ENCODE measurements at regions of chr12 and their contacts with region 1.

Region 1: DNA sequence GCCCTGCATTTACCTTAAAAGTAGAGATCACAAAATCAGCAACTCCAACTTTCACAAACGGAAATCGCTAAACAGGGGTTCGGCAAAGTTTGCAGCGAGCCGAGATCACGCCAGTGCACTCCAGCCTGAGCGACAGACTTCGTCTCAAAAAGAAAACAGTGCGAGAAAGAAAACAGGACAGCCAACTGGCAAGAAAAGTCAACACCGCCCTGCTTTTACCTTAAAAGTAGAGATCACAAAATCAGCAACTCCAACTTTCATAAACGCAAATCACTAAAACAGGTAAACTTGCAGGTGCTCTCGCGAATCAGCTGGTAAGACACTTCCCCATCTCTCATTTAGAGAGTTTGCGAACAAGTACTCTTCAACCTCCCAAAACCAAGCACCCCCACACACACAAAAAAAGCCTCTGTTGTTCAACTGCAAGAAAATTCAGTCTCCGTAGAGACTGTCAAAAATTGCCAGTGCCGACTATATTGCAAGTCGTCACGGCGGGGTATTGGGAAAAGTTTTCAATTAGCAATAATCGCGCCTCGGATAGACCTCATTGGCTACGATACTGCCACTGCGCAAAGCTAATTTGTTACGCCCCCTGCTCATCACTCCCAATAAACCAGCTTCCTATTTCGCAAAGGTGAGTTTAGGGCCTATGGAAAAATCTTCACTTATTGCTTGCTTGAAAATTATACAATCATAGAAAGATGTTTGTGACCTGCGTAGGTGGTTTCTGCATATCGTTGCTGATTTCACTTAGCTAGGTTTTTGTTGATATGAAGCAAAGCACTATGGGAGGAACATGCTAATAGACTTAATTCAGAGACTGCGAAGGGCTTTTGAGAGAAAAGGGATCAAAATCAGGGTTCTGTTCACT is at the start of gene RNU4-1:
- DNase-seq: peak; percentile 99
- ATAC-seq: peak; percentile 60
- H3K4me3 ChIP-seq: peak within 1 kb of the TSS; percentile 47 to 56
- H3K27ac ChIP-seq: peak within 1 kb of the TSS; percentile 84
- H3K4me1 ChIP-seq: peaks cover 10 to 36% of the 10 kb centered on the region in 2 experiments
- H3K27me3 ChIP-seq: no peaks in the 10 kb centered on the region
- CTCF ChIP-seq: 0 out of 6 replicates have a peak, but pooled peaks of 1 of the 3 experiments have one; percentile 6
- POLR2A ChIP-seq: peak; percentile 100
- RAD21 ChIP-seq: 0 out of 2 replicates have a peak, but pooled peaks have one; percentile 24
- total RNA-seq, gene RNU4-1: 2,323 TPM

Region 2: DNA sequence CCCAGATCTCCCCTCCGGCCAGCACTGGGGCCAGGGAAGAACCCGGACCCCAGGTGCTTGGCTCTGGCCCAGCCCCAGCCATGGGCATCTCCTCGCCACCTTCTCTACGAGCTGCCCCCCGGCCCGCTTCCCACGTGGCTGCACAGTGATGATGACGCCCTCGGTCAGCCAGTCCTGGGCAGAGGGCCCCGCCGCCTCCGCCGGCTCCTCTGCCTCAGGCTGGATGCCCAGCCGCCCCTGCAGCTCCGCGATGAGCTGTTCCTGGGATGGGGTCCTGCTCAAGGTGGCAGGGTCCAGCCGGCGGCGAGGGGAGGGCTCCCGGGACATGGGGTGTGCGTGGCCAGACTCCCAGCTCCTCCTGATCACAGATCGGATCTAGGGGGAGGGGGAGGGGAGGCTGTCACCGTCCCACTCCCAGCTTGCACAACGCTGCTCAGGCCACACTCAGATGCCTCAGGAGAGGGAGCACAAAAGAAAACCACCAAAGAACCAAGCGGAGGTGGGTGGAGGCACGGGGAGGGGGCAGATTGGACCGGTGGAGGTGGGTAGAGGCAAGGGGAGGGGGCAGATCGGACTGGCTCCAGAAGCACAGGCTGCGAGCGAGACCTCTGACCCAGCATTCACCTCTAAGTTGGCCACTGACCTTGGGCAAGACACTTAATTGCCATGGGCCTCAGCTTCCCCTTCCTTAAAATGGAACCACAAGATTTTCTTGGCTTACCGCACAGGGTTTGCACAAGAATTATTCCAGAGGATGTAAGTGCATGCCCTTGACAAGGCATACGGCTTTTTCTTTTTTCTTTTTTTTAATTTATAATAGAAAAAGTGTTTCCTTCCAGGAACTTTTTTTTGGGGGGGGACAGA is 75.9 kb before region 1 on chr12:
- CTCF ChIA-PET with region 1: no interaction called
- POLR2A ChIA-PET with region 1: interaction called, 11 read pairs
- RAD21 ChIA-PET with region 1: no interaction called
- intact Hi-C with region 1: no loop called
- DNase-seq: no peak
- ATAC-seq: no peak
- H3K4me3 ChIP-seq: no peak overlapping the region
- H3K27ac ChIP-seq: no peak overlapping the region
- H3K4me1 ChIP-seq: no peaks in the 10 kb centered on the region
- H3K27me3 ChIP-seq: no peaks in the 10 kb centered on the region
- CTCF ChIP-seq: no peak
- POLR2A ChIP-seq: no peak
- RAD21 ChIP-seq: no peak

Region 3: GRCh38 chr12:120234643-120235368 is 58.1 kb before region 1 on chr12:
- CTCF ChIA-PET with region 1: interaction called, 18 read pairs
- POLR2A ChIA-PET with region 1: interaction called, 394 read pairs
- RAD21 ChIA-PET with region 1: interaction called, 5 read pairs
- intact Hi-C with region 1: no loop called
- DNase-seq: peak; percentile 61
- ATAC-seq: peak; percentile 32
- H3K4me3 ChIP-seq: peak overlapping the region in 1 of 2 experiments; percentile 11; a peak in 1 of 4 replicates
- H3K27ac ChIP-seq: peak overlapping the region; percentile 100
- H3K4me1 ChIP-seq: peaks cover 88 to 99% of the 10 kb centered on the region in 2 experiments
- H3K27me3 ChIP-seq: no peaks in the 10 kb centered on the region
- CTCF ChIP-seq: peak in 2 of 3 experiments; percentile 56 to 60; a peak in 4 of 6 replicates
- POLR2A ChIP-seq: no peak
- RAD21 ChIP-seq: no peak

Region 4: GRCh38 chr12:120265473-120266179 is 27.3 kb before region 1 on chr12 and contains the start of gene PXN:
- CTCF ChIA-PET with region 1: interaction called, 9 read pairs
- POLR2A ChIA-PET with region 1: interaction called, 40 read pairs
- RAD21 ChIA-PET with region 1: interaction called in 1 of 2 experiments, 3 read pairs
- intact Hi-C with region 1: no loop called
- DNase-seq: peak; percentile 67
- ATAC-seq: peak; percentile 84
- H3K4me3 ChIP-seq: peak within 1 kb of the TSS; percentile 66 to 85
- H3K27ac ChIP-seq: peak within 1 kb of the TSS; percentile 93
- H3K4me1 ChIP-seq: peaks cover 41 to 55% of the 10 kb centered on the region in 2 experiments
- H3K27me3 ChIP-seq: no peaks in the 10 kb centered on the region
- CTCF ChIP-seq: peak in 2 of 3 experiments; percentile 73 to 80; a peak in 4 of 6 replicates
- POLR2A ChIP-seq: peak; percentile 14
- RAD21 ChIP-seq: no peak
- total RNA-seq, gene PXN: 211 TPM

Region 5: GRCh38 chr12:120317224-120318105 is 24.6 kb after region 1 on chr12:
- CTCF ChIA-PET with region 1: no interaction called
- POLR2A ChIA-PET with region 1: interaction called, 12 read pairs
- RAD21 ChIA-PET with region 1: no interaction called
- intact Hi-C with region 1: no loop called
- DNase-seq: peak; percentile 99
- ATAC-seq: peak; percentile 98
- H3K4me3 ChIP-seq: peak overlapping the region; percentile 65 to 70
- H3K27ac ChIP-seq: peak overlapping the region; percentile 55
- H3K4me1 ChIP-seq: peaks cover 2 to 15% of the 10 kb centered on the region in 2 experiments; a peak in 1 of 4 replicates
- H3K27me3 ChIP-seq: no peaks in the 10 kb centered on the region
- CTCF ChIP-seq: peak; percentile 45 to 87 (median 57)
- POLR2A ChIP-seq: peak; percentile 82
- RAD21 ChIP-seq: no peak

Region 6: DNA sequence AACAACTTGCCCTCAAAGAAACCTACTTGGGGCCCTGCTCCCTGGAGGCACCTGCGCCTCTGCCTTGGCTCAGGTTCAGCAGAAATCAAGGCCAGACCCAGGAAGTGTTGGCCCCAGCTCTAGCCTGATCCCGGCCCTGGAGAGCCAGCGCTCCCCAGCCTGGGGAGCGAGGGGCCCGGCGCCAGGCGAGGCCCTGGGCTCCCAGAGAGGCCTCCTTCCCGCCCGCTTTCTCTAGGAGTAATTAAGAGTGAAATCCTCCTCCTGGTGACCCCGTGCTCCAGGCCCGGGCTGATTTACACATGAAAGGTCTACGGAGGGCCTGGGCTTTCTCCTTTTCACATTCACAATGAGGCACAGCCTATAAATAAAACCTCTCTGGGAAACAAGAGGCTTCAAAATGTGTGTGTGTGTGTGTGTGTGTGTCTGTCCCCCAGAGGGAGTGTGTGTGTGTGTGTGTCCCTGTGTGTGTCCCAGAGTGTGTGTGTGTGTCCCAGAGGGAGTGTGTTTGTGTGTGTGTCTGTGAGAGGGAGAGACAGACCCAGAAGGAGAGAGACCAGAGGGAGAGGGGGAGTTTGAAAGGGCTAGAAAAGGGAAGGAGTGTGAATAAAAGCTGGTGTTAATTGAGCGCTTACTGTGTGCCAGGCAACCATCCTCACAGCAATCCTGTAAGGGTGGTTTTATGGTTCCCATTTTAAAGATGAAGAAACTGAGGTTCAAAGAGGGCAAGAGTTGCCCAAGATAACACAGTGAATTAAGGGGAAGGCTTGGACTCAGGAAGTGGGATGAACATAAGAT is 121.2 kb after region 1 on chr12:
- CTCF ChIA-PET with region 1: no interaction called
- POLR2A ChIA-PET with region 1: no interaction called
- RAD21 ChIA-PET with region 1: no interaction called
- intact Hi-C with region 1: no loop called
- DNase-seq: no peak
- ATAC-seq: no peak
- H3K4me3 ChIP-seq: no peak overlapping the region
- H3K27ac ChIP-seq: no peak overlapping the region
- H3K4me1 ChIP-seq: no peaks in the 10 kb centered on the region
- H3K27me3 ChIP-seq: no peaks in the 10 kb centered on the region
- CTCF ChIP-seq: no peak
- POLR2A ChIP-seq: no peak
- RAD21 ChIP-seq: no peak

Measured in HCT116 (cell line).